Mammary epithelial cell (primary cell): ENCODE measurements at regions of chr6 and their contacts with region 1.

Region 1: GRCh38 chr6:48973491-48973890 is 489.6 kb downstream of the MMUT start:
- DNase-seq: no peak
- H3K4me3 ChIP-seq: no peak overlapping the region
- H3K27ac ChIP-seq: no peak overlapping the region
- H3K4me1 ChIP-seq: no peaks in the 10 kb centered on the region
- H3K27me3 ChIP-seq: no peaks in the 10 kb centered on the region
- CTCF ChIP-seq: no peak

Region 2: GRCh38 chr6:48962041-48962440 is 11.4 kb before region 1 on chr6:
- CTCF ChIA-PET with region 1: no interaction called
- dilution Hi-C with region 1: no loop called
- in situ Hi-C with region 1: no loop called
- intact Hi-C with region 1: loop called (anchors 1 kb)
- DNase-seq: no peak
- H3K4me3 ChIP-seq: no peak overlapping the region
- H3K27ac ChIP-seq: no peak overlapping the region
- H3K4me1 ChIP-seq: peaks cover 3% of the 10 kb centered on the region
- H3K27me3 ChIP-seq: no peaks in the 10 kb centered on the region
- CTCF ChIP-seq: no peak

Region 3: DNA sequence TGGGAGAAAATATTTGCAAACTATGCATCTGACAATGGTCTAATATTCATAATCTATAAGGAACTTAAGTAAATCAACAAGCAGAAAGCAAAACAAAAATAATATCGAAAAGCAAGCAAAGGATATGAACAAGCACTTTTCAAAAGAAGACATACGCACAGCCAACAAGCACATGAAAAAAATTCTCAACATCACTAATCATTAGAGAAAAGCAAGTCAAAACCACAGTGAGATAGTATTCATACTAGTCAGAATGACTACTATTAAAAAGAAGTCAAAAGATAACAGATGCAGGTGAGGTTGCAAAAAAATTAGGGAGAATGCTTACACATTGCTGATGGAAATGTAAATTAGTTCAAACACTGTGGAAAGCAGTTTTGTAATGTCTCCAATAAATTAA is 79.4 kb after region 1 on chr6:
- CTCF ChIA-PET with region 1: no interaction called
- dilution Hi-C with region 1: no loop called
- in situ Hi-C with region 1: no loop called
- intact Hi-C with region 1: no loop called
- DNase-seq: peak; percentile 68
- H3K4me3 ChIP-seq: no peak overlapping the region
- H3K27ac ChIP-seq: peak overlapping the region; percentile 81
- H3K4me1 ChIP-seq: peaks cover 15% of the 10 kb centered on the region
- H3K27me3 ChIP-seq: no peaks in the 10 kb centered on the region
- CTCF ChIP-seq: no peak